MCF 10A (cell line): ENCODE measurements at regions of chr6 and their contacts with region 1.

Region 1: DNA sequence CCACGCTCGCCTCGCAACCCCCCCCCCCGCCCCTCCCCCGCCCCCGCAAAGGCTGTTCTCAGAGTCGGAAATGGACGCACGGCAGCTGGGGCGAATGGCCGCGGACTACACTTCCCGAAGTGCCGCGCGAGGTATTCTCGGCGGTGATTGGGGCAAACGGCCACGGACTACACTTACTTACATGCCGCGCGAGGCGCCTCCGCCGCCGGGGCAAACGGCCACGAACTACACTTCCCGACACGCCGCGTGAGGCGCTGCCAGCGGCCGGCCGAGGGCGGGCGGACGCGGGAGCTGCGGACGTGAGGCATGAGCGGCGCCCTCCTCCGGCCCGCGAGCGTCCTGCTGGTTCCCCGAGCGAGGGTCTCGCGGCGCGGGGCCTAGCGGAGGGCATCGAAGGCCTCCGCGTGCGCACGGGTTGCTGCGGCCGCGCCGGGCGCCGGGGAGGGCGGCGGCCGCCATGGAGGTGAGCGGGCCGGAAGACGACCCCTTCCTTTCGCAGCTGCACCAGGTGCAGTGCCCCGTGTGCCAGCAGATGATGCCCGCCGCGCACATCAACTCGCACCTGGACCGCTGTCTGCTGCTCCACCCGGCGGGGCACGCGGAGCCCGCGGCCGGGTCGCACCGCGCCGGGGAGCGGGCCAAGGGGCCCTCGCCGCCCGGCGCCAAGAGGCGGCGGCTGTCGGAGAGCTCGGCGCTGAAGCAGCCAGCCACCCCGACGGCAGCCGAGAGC is at the start of gene WRNIP1:
- DNase-seq: peak; percentile 98
- H3K4me3 Mint-ChIP-seq: peak within 1 kb of the TSS; percentile 71
- H3K27ac Mint-ChIP-seq: peak within 1 kb of the TSS; percentile 98
- H3K4me1 Mint-ChIP-seq: peaks cover 24% of the 10 kb centered on the region
- H3K27me3 Mint-ChIP-seq: no peaks in the 10 kb centered on the region
- CTCF ChIP-seq: peak; percentile 43
- total RNA-seq, gene WRNIP1: 33.4 and 44.8 TPM in 2 replicates

Region 2: DNA sequence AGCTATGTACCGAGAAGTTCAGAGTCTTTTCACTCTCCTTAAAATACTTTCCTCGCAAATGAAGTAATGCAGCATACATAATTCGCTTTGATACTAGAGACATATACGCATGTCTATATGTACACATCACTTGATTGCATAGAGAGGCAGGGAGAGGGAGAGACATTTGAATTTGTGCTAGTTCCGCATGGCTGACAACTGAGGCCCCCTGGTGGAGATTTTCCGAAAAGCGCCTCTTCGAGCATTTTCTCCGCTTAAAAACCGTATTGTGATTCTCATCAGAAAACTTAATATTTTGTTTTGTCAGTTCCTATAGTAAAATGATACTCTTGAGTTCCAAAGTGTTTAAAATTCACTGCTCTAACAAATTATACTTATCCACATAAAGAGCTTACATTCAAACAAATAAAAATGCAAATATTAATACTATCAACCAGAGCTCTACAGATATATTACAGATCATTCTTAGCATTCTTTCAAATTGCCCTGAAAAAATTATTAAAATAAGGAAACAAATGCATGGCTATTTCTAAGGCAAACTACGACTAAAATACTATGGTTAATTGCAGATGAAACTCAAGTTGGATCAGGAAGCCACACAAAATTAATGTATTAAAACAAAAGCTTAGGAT is 15.2 kb before region 1 on chr6:
- CTCF ChIA-PET with region 1: interaction called, 21 read pairs
- POLR2A ChIA-PET with region 1: interaction called, 7 read pairs
- intact Hi-C with region 1: no loop called
- DNase-seq: peak; percentile 63
- H3K4me3 Mint-ChIP-seq: no peak overlapping the region
- H3K27ac Mint-ChIP-seq: no peak overlapping the region
- H3K4me1 Mint-ChIP-seq: no peaks in the 10 kb centered on the region
- H3K27me3 Mint-ChIP-seq: no peaks in the 10 kb centered on the region
- CTCF ChIP-seq: peak; percentile 80

Region 3: GRCh38 chr6:2810092-2810671 is 44.9 kb after region 1 on chr6:
- CTCF ChIA-PET with region 1: interaction called, 3 read pairs
- POLR2A ChIA-PET with region 1: interaction called, 6 read pairs
- intact Hi-C with region 1: loop called (anchors 2 kb)
- DNase-seq: peak; percentile 99
- H3K4me3 Mint-ChIP-seq: peak overlapping the region; percentile 24
- H3K27ac Mint-ChIP-seq: peak overlapping the region; percentile 84
- H3K4me1 Mint-ChIP-seq: peaks cover 24% of the 10 kb centered on the region
- H3K27me3 Mint-ChIP-seq: no peaks in the 10 kb centered on the region
- CTCF ChIP-seq: no peak

Region 4: DNA sequence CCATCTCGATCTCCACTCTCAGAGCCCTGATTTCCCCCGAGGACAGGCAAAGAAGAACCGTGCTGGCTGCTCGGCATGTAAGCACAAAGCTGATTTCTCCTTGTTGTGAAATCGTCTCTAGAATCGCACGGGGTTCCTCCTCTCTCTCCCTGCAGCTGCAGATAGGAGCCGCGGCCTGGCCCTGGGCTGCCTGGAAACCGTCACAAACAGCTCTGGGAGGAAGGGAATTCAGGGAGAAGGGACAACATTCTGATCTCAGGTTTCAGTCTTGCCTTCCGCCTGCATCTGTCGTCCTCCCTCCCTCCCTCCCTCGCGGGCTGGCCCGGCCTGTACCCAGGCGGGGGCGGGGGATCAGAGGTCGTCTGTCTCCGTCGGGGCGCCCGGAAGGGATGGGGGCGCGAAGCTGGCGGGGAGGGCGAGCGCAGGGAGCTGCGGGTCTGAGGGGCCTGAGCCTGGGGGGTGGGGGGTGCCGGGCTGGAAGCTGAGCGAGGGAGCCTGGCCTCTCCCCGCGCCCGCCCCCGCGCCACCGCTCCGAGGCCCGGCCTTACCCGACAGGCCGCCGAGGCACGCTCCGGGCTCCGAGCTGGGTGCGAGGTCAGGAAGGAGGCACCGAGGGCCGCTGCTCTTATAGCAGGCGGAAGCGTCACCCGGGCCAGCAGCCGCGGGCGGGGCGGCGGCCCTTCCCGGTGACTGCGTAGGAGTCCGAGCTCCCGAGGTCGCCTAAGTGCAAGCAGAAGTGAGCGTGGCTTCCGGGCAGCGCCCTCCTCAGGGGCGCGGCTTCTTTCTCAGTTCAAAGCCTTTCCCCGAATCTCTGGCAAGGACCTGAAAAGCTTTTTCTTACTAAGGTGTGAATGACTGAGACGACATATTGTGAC is 76.2 kb after region 1 on chr6 and contains the start of gene SERPINB1:
- CTCF ChIA-PET with region 1: interaction called, 13 read pairs
- POLR2A ChIA-PET with region 1: interaction called, 34 read pairs
- intact Hi-C with region 1: loop called (anchors 2 kb)
- DNase-seq: peak; percentile 93
- H3K4me3 Mint-ChIP-seq: peak within 1 kb of the TSS; percentile 88
- H3K27ac Mint-ChIP-seq: peak within 1 kb of the TSS; percentile 96
- H3K4me1 Mint-ChIP-seq: peaks cover 31% of the 10 kb centered on the region
- H3K27me3 Mint-ChIP-seq: no peaks in the 10 kb centered on the region
- CTCF ChIP-seq: no peak
- total RNA-seq, gene SERPINB1: 20.8 and 28.0 TPM in 2 replicates